ENCODE measurements at regions of chr16 and their contacts with region 1.

Region 1: GRCh38 chr16:64791756-64792155 is 330.1 kb downstream of the CDH11 start:
- DNase-seq: no peak
- ATAC-seq: no peak
- H3K4me3 ChIP-seq: no peak overlapping the region
- H3K27ac ChIP-seq: no peak overlapping the region
- H3K4me1 ChIP-seq: peaks cover 4% of the 10 kb centered on the region in 2 donors
- H3K27me3 ChIP-seq: no peaks in the 10 kb centered on the region

Region 2: GRCh38 chr16:64478252-64478906 is 313.4 kb before region 1 on chr16:
- intact Hi-C with region 1: loop called in 1 of 2 experiments (anchors 5 kb)
- DNase-seq: no peak
- ATAC-seq: peak; percentile 82
- H3K4me3 ChIP-seq: no peak overlapping the region
- H3K27ac ChIP-seq: no peak overlapping the region
- H3K4me1 ChIP-seq: peaks cover 6 to 10% of the 10 kb centered on the region in 2 donors
- H3K27me3 ChIP-seq: no peaks in the 10 kb centered on the region